ENCODE measurements at regions of chr6 and their contacts with region 1.

Region 1: GRCh38 chr6:28281288-28282064 is at the start of gene PGBD1:
- DNase-seq: no peak
- H3K4me3 ChIP-seq: peak within 1 kb of the TSS; percentile 53
- H3K27me3 ChIP-seq: no peaks in the 10 kb centered on the region
- CTCF ChIP-seq: no peak
- polyA plus RNA-seq, gene PGBD1: 3.1 and 3.4 TPM in 2 replicates

Region 2: DNA sequence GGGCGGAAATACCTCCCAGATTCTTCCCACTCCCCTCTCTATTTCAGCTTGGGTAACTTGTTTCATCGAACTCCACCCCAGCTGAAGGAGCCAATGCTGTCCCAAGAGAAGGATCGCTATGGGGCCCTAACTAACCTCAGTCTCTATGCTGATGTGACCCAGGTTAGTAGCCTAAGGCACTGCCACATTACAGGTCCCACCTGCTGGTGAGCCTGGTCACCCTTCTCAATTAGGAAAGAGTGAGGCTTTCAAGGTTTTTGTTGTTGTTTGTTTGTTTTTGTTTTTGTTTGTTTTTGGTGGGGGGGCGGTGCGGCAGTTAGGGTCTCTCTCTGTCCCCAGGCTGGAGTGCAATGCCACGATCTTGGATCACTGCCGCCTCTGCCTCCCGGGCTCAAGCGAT is 537.7 kb before region 1 on chr6:
- CTCF ChIA-PET with region 1: no interaction called
- POLR2A ChIA-PET with region 1: no interaction called
- DNase-seq: no peak
- H3K4me3 ChIP-seq: no peak overlapping the region
- H3K27me3 ChIP-seq: peaks cover 1% of the 10 kb centered on the region; the same call in 1 of the 2 replicates
- CTCF ChIP-seq: no peak

Region 3: GRCh38 chr6:28266962-28267694 is 14.3 kb before region 1 on chr6 and contains the start of gene ZSCAN26:
- CTCF ChIA-PET with region 1: interaction called, 3 read pairs
- POLR2A ChIA-PET with region 1: interaction called, 15 read pairs
- DNase-seq: no peak
- H3K4me3 ChIP-seq: peak within 1 kb of the TSS; percentile 78
- H3K27me3 ChIP-seq: no peaks in the 10 kb centered on the region
- CTCF ChIP-seq: no peak
- polyA plus RNA-seq, gene ZSCAN26: 14.6 and 19.5 TPM in 2 replicates

Region 4: DNA sequence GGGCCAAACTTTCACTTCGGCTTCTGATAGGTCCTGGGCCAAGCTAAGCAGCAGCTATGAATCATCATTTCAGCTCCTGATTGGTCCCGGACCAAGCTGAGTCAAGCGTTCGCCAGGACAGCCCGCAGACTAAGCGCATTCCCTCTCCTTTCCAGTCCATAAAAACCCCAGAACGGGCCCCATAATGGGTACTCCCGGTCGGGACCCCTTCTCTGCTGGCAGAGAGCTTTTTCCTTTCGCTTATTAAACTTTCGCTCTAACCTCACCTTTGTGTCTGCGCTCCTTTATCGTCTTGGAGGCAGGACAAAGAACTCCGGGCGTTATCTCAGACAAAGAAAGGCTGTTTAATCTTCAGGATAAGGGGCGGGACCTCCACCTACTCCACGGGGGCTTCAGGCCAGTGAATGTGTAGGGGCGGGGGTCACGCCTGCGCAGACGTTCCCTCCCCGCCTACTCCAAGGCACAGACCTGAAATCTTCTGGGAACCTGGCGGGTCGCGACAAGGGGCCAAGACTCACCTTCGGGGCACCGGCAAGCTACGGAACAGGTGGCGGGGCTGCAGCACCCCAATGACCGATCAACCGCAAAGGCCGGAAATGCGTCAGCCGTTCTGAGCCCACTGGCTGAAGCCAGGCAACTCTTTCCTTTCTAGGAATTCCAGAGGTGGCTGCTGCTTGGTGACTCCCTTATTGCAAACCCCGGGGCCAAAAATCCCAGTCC is 54.2 kb after region 1 on chr6 and contains the start of gene ZSCAN31:
- CTCF ChIA-PET with region 1: no interaction called
- POLR2A ChIA-PET with region 1: no interaction called
- DNase-seq: peak; percentile 87
- H3K4me3 ChIP-seq: peak within 1 kb of the TSS; percentile 68
- H3K27me3 ChIP-seq: no peaks in the 10 kb centered on the region
- CTCF ChIP-seq: no peak
- polyA plus RNA-seq, gene ZSCAN31: 1.7 and 1.9 TPM in 2 replicates